Caco-2 (cell line): ENCODE measurements at regions of chr19 and their contacts with region 1.

Region 1: DNA sequence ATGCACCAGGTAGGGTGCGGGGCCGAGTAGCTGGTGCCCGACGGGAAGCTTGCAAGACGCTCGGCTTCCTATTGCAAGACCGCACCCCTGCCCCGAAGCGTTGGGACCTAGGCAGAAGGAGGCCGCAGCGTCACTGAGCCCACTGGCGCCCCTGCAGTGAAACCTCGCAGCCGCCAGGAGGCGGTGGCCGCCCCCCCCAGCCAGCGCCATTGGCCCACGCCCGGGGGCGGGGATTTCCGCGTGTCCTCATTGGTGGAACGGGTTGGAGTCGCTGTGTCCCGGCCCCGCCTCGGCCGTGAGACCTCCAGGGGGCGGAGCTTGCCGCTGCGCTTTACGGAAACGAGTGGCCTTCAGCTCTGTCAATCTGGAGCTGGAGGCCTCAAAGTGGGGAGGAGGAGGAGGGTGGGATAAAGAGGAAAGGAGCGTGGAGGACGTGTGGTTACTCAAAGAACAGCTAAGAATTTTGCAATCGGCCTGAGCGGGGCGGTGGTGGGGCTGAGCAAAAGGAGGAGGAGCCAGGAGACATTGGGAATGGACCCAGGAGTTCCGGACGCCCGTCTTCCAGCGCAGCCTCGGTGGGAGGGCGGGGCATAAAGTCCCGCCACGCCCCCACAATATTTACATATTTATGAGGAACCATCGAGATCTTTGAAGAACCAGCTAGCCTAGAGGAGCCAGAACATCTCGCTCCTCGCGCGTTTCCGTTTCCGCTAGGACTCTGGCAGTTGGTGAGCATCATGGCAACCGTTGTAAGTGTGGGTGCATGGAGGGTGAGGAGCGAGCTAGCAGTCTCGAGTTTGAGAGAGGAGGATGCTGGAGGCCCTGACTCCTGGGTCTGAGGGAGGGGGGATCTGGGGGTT is at the starts of genes GYS1 and RUVBL2:
- DNase-seq: peak; percentile 100
- H3K4me3 ChIP-seq: peak within 1 kb of the TSS; percentile 77
- H3K4me3 Mint-ChIP-seq: peak within 1 kb of the TSS; percentile 99
- H3K27ac Mint-ChIP-seq: peak within 1 kb of the TSS; percentile 97
- H3K4me1 ChIP-seq: peaks cover 13% of the 10 kb centered on the region; the same call in 1 of the 2 replicates
- H3K4me1 Mint-ChIP-seq: peaks cover 25% of the 10 kb centered on the region
- H3K27me3 ChIP-seq: no peaks in the 10 kb centered on the region
- H3K27me3 Mint-ChIP-seq: no peaks in the 10 kb centered on the region
- CTCF ChIP-seq: peak; percentile 98 to 99
- total RNA-seq, gene GYS1: 62.7 and 65.3 TPM in 2 replicates
- total RNA-seq, gene RUVBL2: 165 and 172 TPM in 2 replicates

Region 2: GRCh38 chr19:48872182-48872883 is 121.1 kb before region 1 on chr19 and contains the start of gene PPP1R15A:
- CTCF ChIA-PET with region 1: interaction called, 7 read pairs
- POLR2A ChIA-PET with region 1: interaction called, 14 read pairs
- intact Hi-C with region 1: no loop called
- DNase-seq: peak; percentile 99
- H3K4me3 ChIP-seq: peak within 1 kb of the TSS; percentile 99
- H3K4me3 Mint-ChIP-seq: peak within 1 kb of the TSS; percentile 99
- H3K27ac Mint-ChIP-seq: peak within 1 kb of the TSS; percentile 100
- H3K4me1 ChIP-seq: peaks cover 56% of the 10 kb centered on the region
- H3K4me1 Mint-ChIP-seq: peaks cover 49% of the 10 kb centered on the region
- H3K27me3 ChIP-seq: no peaks in the 10 kb centered on the region
- H3K27me3 Mint-ChIP-seq: peaks cover 3% of the 10 kb centered on the region
- CTCF ChIP-seq: no peak
- total RNA-seq, gene PPP1R15A: 83.3 and 94.7 TPM in 2 replicates

Region 3: GRCh38 chr19:48970923-48971395 is 22.4 kb before region 1 on chr19:
- CTCF ChIA-PET with region 1: interaction called, 18 read pairs
- POLR2A ChIA-PET with region 1: interaction called, 16 read pairs
- intact Hi-C with region 1: no loop called
- DNase-seq: peak; percentile 73 to 79
- H3K4me3 ChIP-seq: no peak overlapping the region
- H3K4me3 Mint-ChIP-seq: no peak overlapping the region
- H3K27ac Mint-ChIP-seq: no peak overlapping the region
- H3K4me1 ChIP-seq: peaks cover 12% of the 10 kb centered on the region
- H3K4me1 Mint-ChIP-seq: peaks cover 6% of the 10 kb centered on the region
- H3K27me3 ChIP-seq: no peaks in the 10 kb centered on the region
- H3K27me3 Mint-ChIP-seq: no peaks in the 10 kb centered on the region
- CTCF ChIP-seq: peak; percentile 81 to 88

Region 4: DNA sequence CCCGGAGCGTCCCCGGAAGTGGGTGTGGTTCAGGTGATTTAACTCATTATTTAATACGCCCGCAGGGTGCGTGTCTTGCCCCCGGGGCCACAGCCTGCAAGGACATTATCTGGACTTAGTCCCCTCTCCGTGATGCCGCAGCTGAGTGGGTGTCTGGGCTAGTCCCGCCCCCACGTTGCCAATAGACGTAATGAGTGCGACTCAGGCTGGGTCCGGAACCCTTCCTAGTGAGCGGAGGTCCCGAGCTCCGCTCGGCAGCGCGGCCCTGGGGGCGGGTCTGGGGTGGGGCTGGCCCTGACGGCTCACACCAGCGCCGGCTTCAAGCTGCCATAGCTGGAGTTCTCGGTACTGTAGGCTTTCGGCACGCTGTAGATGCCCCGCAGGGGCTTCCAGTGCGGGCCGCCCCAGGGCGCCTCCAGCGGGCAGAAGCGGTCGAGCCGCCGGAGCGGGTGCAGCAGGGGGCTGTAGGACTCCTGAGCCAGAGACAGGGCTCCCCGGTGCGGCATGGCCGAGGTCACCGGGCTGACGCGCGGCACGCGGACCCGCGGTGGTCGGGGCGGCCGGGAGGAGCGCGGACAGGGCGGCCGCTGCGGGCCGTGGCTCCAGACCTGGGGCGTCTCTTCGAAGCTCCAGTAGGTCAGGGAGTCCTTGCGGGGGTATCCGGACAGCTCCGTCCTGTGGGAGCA is 24.4 kb after region 1 on chr19:
- CTCF ChIA-PET with region 1: interaction called, 51 read pairs
- POLR2A ChIA-PET with region 1: interaction called, 9 read pairs
- intact Hi-C with region 1: loop called (anchors 2 kb)
- DNase-seq: peak; percentile 87 to 88
- H3K4me3 ChIP-seq: peak overlapping the region; percentile 49
- H3K4me3 Mint-ChIP-seq: peak overlapping the region; percentile 79
- H3K27ac Mint-ChIP-seq: no peak overlapping the region
- H3K4me1 ChIP-seq: 0 out of 2 replicates have a peak, but pooled peaks cover 9% of the 10 kb centered on the region
- H3K4me1 Mint-ChIP-seq: peaks cover 21% of the 10 kb centered on the region
- H3K27me3 ChIP-seq: no peaks in the 10 kb centered on the region; the same call in 1 of the 2 replicates
- H3K27me3 Mint-ChIP-seq: no peaks in the 10 kb centered on the region
- CTCF ChIP-seq: peak; percentile 47 to 71

Region 5: GRCh38 chr19:49097455-49098288 is 104.3 kb after region 1 on chr19:
- CTCF ChIA-PET with region 1: interaction called, 13 read pairs
- POLR2A ChIA-PET with region 1: interaction called, 8 read pairs
- intact Hi-C with region 1: no loop called
- DNase-seq: peak; percentile 83 to 88
- H3K4me3 ChIP-seq: no peak overlapping the region
- H3K4me3 Mint-ChIP-seq: no peak overlapping the region
- H3K27ac Mint-ChIP-seq: no peak overlapping the region
- H3K4me1 ChIP-seq: no peaks in the 10 kb centered on the region; the same call in 1 of the 2 replicates
- H3K4me1 Mint-ChIP-seq: peaks cover 15% of the 10 kb centered on the region
- H3K27me3 ChIP-seq: no peaks in the 10 kb centered on the region
- H3K27me3 Mint-ChIP-seq: no peaks in the 10 kb centered on the region
- CTCF ChIP-seq: peak; percentile 98 to 99